ENCODE measurements at regions of chr6 and their contacts with region 1.

Region 1: DNA sequence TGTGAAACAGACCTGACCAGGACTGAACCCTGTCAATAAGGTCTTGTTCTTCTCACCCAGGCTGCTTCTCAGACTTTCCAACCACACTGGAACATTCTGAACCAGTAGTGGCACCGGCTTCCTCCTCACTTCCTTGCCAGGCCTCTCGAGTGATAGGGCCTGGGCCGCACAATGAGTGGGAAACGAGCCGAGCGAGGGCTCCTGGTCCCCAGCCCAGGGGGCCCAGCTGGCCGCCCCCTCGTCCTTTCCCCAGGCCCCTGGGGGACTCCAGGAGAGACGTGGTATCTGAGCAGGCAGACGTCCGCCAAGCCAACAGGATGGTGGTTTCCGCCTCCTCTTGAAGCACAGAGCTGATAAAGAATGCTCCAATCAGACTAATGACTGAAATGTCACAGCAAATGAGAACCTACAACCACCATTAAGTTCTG is 117.9 kb downstream of the GMDS start:
- DNase-seq: peak; percentile 94 to 99 (median 97)
- H3K4me3 ChIP-seq: peak overlapping the region in 4 of 7 experiments; percentile 15 to 44 (median 37)
- H3K27ac ChIP-seq: peak overlapping the region; percentile 59 to 85
- H3K4me1 ChIP-seq: peaks cover 30 to 85% (median 54%) of the 10 kb centered on the region in 4 experiments
- H3K27me3 ChIP-seq: no peaks in the 10 kb centered on the region

Region 2: DNA sequence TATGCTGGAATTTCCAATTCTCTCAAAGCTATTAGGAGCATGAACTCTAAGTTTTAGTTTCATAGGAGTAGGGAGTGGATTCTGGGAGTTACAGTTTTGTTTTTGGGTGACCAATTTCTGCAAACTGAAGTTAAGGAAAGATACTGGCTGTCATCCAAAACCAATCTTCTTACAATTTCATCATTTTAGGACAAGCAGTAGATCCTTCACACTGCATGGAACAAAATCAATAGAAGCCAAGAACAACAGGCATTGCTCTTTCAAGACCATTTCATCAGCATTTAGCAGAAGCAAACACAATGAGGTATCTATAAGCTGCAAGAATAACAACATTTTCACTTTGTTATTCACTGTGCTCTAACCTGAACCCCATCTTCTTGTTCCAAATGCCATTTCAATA is 55.0 kb before region 1 on chr6:
- CTCF ChIA-PET with region 1: no interaction called
- POLR2A ChIA-PET with region 1: no interaction called
- DNase-seq: no peak
- H3K4me3 ChIP-seq: no peak overlapping the region
- H3K27ac ChIP-seq: no peak overlapping the region
- H3K4me1 ChIP-seq: no peaks in the 10 kb centered on the region
- H3K27me3 ChIP-seq: no peaks in the 10 kb centered on the region

Region 3: GRCh38 chr6:2116496-2116895 is 11.0 kb before region 1 on chr6:
- CTCF ChIA-PET with region 1: no interaction called
- POLR2A ChIA-PET with region 1: no interaction called
- DNase-seq: no peak
- H3K4me3 ChIP-seq: no peak overlapping the region
- H3K27ac ChIP-seq: no peak overlapping the region
- H3K4me1 ChIP-seq: peaks cover 0 to 7% (median under 1%) of the 10 kb centered on the region in 4 experiments
- H3K27me3 ChIP-seq: no peaks in the 10 kb centered on the region

Region 4: DNA sequence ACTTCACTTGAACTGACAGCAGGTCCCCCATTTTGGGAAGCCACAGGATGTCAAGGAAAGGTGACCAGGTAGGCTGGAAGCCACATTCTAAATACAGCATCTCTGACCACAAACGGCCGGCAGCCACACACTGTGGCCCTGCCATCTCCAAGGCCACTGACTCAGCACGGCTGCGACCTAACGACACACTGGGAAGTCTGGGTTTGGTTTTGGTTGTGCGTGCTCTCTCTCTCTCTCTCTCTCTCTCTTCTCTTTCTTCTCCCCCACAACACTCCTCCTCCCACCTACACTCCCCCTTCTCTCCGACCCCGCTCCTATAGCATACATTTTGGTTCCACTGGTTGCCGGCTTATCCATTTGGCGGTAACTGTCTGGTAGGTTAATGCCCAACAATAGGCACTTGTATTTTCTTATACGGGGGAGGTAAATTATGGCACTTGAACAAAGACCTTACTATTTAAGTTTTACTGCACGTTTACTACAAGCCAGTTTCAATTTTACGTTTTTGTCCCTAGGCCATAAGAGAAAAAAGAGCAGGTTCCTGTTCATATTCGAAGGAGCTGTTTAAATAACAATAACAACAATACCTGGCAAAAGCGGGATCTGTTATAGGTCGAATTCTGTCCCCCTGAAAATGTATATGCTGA is 14.3 kb after region 1 on chr6:
- CTCF ChIA-PET with region 1: interaction called, 15 read pairs
- POLR2A ChIA-PET with region 1: interaction called, 3 read pairs
- DNase-seq: peak; percentile 51 to 89 (median 84)
- H3K4me3 ChIP-seq: peak overlapping the region in 5 of 7 experiments; percentile 3 to 57 (median 52)
- H3K27ac ChIP-seq: peak overlapping the region; percentile 8 to 63
- H3K4me1 ChIP-seq: peaks cover 12 to 48% (median 33%) of the 10 kb centered on the region in 4 experiments
- H3K27me3 ChIP-seq: no peaks in the 10 kb centered on the region